ENCODE measurements at regions of chr1 and their contacts with region 1.

Region 1: DNA sequence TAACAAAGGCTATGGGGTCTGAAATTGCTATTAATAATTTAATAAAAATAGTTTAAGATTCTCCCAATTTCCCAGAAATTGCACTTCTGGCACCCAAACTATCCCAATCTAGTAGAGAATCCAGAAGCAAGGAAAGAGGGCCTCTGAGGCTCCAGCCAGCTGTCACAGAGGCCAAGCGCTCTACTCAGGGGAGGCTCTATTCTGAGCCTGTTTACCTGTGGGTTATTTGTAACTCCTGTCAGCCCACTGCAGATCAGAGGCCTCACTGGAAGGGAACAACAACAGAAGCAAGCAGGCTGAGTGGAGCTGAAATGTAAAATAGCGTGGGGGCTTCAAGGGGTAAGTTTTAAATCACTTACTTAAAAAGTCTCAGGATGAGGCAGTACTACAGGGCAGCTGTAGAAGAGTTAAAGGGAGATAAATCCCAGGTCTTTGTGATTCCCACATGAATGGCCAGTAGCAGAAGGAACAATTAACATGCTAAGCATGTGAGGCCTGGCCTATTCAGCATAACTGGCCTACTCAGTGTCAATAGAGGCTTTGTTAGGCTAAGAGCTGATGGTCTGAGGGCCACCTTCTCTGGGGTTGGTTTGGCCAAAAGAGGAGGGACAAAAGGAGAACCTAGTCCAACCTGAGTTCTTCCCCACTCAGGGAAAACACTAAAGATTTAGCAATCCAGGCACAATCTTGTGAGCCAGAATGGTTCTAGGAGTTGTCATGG is 12.8 kb downstream of the ZNF687 start:
- DNase-seq: no peak
- H3K4me3 ChIP-seq: no peak overlapping the region
- H3K27ac ChIP-seq: no peak overlapping the region
- H3K4me1 ChIP-seq: peaks cover 0 to under 1% (median 0%) of the 10 kb centered on the region in 3 donors
- H3K27me3 ChIP-seq: no peaks in the 10 kb centered on the region
- CTCF ChIP-seq: no peak
- POLR2A ChIP-seq: no peak

Region 2: DNA sequence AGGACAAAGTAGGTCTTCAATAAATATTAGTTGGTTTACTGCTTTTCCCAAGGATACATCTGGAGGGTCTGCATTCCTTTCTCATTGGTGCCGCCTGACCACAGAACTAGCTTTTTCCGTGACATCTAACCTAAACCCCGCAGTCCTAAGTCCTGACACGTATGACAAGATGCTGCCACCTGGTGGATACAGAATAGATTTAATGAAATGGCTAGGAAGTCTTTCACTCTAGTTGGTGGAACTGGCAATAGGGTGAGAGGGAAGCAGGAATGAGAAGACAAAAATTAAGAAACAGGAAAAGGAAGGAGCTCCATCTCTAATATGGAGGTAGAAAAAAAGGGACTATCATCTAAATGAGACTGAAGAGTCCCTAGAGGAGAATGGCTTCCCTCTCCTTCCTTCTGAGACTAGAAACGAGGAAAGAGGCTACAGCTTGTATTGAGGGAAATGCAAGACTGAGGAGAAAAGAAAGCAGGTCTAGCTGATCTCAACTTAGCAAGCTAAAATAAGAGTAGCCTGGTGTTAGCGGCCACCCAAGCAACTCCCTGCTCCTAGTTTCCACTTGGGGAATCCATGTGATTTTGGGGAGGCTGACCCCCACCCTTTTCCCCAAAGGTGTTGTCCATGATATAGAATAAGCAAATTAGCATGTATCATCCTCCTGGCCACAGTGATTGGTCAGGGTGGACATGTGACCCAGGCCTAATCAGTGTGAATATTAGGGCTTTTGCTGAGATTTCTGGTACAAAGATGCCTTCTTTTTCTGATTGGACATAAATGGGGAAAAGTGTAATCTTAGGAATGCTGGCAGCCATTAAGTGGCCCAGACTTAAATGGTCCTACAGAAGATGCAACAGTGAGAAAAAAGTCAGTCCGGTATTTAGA is 46.2 kb after region 1 on chr1:
- intact Hi-C with region 1: loop called (anchors 5 kb)
- DNase-seq: no peak
- H3K4me3 ChIP-seq: no peak overlapping the region
- H3K27ac ChIP-seq: peak overlapping the region in 2 of 4 donors; percentile 45 to 47
- H3K4me1 ChIP-seq: peaks cover 4 to 28% (median 7%) of the 10 kb centered on the region in 3 donors
- H3K27me3 ChIP-seq: no peaks in the 10 kb centered on the region
- CTCF ChIP-seq: peak; percentile 72 to 80 (median 76)
- POLR2A ChIP-seq: no peak

Measured in esophagus squamous epithelium (tissue), 5 donors.